Panc1 (cell line): ENCODE measurements at regions of chr12 and their contacts with region 1.

Region 1: GRCh38 chr12:122437656-122438121 is 15.2 kb upstream of the CLIP1 start:
- DNase-seq: no peak
- ATAC-seq: peak; percentile 74
- H3K4me3 ChIP-seq: no peak overlapping the region
- H3K27ac ChIP-seq: no peak overlapping the region
- H3K4me1 ChIP-seq: peaks cover 7% of the 10 kb centered on the region; the same call in 1 of the 2 replicates
- H3K27me3 ChIP-seq: no peaks in the 10 kb centered on the region
- CTCF ChIP-seq: no peak

Region 2: GRCh38 chr12:122421821-122422729 is 15.6 kb before region 1 on chr12 and contains the start of gene CLIP1:
- CTCF ChIA-PET with region 1: no interaction called
- POLR2A ChIA-PET with region 1: interaction called, 14 read pairs
- in situ Hi-C with region 1: no loop called
- intact Hi-C with region 1: no loop called
- DNase-seq: no peak
- ATAC-seq: peak; percentile 84
- H3K4me3 ChIP-seq: peak within 1 kb of the TSS; percentile 78 to 87
- H3K27ac ChIP-seq: peak within 1 kb of the TSS; percentile 99
- H3K4me1 ChIP-seq: peaks cover 37% of the 10 kb centered on the region
- H3K27me3 ChIP-seq: no peaks in the 10 kb centered on the region
- CTCF ChIP-seq: no peak; the same call in 1 of the 2 replicates
- total RNA-seq, gene CLIP1: 117 TPM